ENCODE measurements at regions of chr6 and their contacts with region 1.

Region 1: GRCh38 chr6:29847871-29848630 is 20.4 kb downstream of the HLA-G start:
- DNase-seq: peak; percentile 87
- ATAC-seq: peak; percentile 83
- H3K4me3 Mint-ChIP-seq: no peak overlapping the region
- H3K27ac Mint-ChIP-seq: no peak overlapping the region
- H3K4me1 Mint-ChIP-seq: peaks cover 23% of the 10 kb centered on the region
- H3K27me3 Mint-ChIP-seq: peaks cover 70% of the 10 kb centered on the region

Region 2: GRCh38 chr6:29813809-29814208 is 34.2 kb before region 1 on chr6:
- CTCF ChIA-PET with region 1: no interaction called
- DNase-seq: no peak
- ATAC-seq: peak; percentile 30
- H3K4me3 Mint-ChIP-seq: no peak overlapping the region
- H3K27ac Mint-ChIP-seq: no peak overlapping the region
- H3K4me1 Mint-ChIP-seq: peaks cover 16% of the 10 kb centered on the region
- H3K27me3 Mint-ChIP-seq: peaks cover 16% of the 10 kb centered on the region

Region 3: GRCh38 chr6:29964887-29965562 is 117.0 kb after region 1 on chr6:
- CTCF ChIA-PET with region 1: interaction called, 57 read pairs
- DNase-seq: peak; percentile 91
- ATAC-seq: peak; percentile 94
- H3K4me3 Mint-ChIP-seq: peak overlapping the region; percentile 87
- H3K27ac Mint-ChIP-seq: peak overlapping the region; percentile 94
- H3K4me1 Mint-ChIP-seq: peaks cover 41% of the 10 kb centered on the region
- H3K27me3 Mint-ChIP-seq: no peaks in the 10 kb centered on the region

Region 4: GRCh38 chr6:30013291-30013922 is 165.4 kb after region 1 on chr6:
- CTCF ChIA-PET with region 1: interaction called, 27 read pairs
- DNase-seq: no peak
- ATAC-seq: peak; percentile 60
- H3K4me3 Mint-ChIP-seq: no peak overlapping the region
- H3K27ac Mint-ChIP-seq: no peak overlapping the region
- H3K4me1 Mint-ChIP-seq: no peaks in the 10 kb centered on the region
- H3K27me3 Mint-ChIP-seq: peaks cover 8% of the 10 kb centered on the region

Region 5: GRCh38 chr6:30066577-30067459 is 218.8 kb after region 1 on chr6 and contains the start of gene PPP1R11:
- CTCF ChIA-PET with region 1: no interaction called
- DNase-seq: peak; percentile 100
- ATAC-seq: peak; percentile 97
- H3K4me3 Mint-ChIP-seq: peak within 1 kb of the TSS; percentile 96
- H3K27ac Mint-ChIP-seq: peak within 1 kb of the TSS; percentile 96
- H3K4me1 Mint-ChIP-seq: peaks cover 57% of the 10 kb centered on the region
- H3K27me3 Mint-ChIP-seq: peaks cover 15% of the 10 kb centered on the region
- total RNA-seq, gene PPP1R11: 49.5 to 50.4 TPM